ENCODE measurements at regions of chr3 and their contacts with region 1.

Region 1: DNA sequence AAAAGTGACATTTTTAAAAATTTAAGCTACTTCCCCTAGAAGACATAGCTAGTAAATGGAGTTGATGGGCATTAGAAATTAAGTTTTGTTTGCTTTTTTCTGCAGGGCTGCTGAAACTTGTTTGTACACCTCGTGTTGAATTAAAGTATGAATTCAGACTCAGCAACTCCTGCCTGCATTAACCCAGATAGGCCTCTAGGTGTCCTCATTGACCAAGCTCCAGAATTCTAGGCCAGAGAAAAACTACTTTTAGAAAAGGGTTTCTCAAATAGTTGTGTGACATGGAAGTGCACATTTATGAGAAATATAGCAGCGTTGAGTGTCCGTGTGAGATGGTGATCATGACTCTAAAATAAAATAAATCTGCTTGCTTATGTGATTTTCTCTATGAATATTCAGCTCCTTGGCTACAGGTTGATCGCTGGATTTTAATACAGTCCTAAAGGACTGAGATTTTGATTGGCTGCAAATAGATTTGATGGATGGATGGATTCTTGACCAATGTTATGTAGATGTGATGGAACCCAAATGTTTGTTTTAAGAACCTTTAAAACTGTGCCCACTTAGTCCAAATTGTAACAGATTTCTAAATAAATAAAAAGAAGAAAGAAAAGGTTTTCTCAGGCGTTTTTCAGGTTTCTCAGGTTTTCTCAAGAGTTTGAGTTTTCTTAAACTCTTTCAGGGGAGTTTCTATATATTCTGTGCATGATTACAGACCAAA is 39.4 kb upstream of the LMOD3 start:
- DNase-seq: peak; percentile 65
- H3K4me3 Mint-ChIP-seq: no peak overlapping the region
- H3K27ac Mint-ChIP-seq: no peak overlapping the region
- H3K4me1 Mint-ChIP-seq: no peaks in the 10 kb centered on the region
- H3K27me3 Mint-ChIP-seq: no peaks in the 10 kb centered on the region
- CTCF ChIP-seq: peak; percentile 88

Region 2: GRCh38 chr3:69143605-69144004 is 18.1 kb before region 1 on chr3:
- CTCF ChIA-PET with region 1: interaction called, 17 read pairs
- POLR2A ChIA-PET with region 1: no interaction called
- intact Hi-C with region 1: no loop called
- DNase-seq: peak; percentile 65
- H3K4me3 Mint-ChIP-seq: no peak overlapping the region
- H3K27ac Mint-ChIP-seq: no peak overlapping the region
- H3K4me1 Mint-ChIP-seq: peaks cover 18% of the 10 kb centered on the region
- H3K27me3 Mint-ChIP-seq: no peaks in the 10 kb centered on the region
- CTCF ChIP-seq: no peak

Region 3: DNA sequence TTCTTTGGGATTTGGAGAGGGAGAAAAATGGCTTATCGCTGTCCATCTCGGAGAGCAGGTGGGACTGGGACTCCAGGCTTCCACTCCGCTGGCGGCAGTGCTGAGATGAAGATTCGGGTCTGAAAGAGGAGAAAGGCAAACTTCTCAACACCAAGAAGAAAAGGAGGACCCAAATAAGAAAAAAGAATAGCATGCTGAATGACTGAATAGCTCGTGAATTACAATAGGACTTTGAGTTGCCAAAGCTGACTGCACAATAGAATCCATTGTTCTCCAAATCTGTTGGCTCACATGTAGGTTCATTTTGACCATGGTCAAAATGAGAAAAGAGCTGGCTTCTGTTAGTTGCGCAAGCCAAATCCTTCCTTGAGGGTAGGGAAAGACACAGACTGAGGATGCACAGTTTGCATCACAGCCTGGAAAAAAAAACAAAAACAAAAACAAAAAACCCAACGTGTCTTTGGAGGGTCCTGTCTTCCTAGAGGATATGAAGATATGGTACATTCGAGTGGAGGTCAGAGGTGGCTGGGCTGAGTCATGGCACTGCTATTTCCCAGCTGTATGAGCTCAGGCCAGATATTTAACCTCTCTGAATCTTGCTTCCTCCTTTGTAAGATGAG is 20.0 kb after region 1 on chr3:
- CTCF ChIA-PET with region 1: interaction called, 11 read pairs
- POLR2A ChIA-PET with region 1: interaction called, 3 read pairs
- intact Hi-C with region 1: no loop called
- DNase-seq: peak; percentile 38
- H3K4me3 Mint-ChIP-seq: no peak overlapping the region
- H3K27ac Mint-ChIP-seq: peak overlapping the region; percentile 46
- H3K4me1 Mint-ChIP-seq: peaks cover 24% of the 10 kb centered on the region
- H3K27me3 Mint-ChIP-seq: no peaks in the 10 kb centered on the region
- CTCF ChIP-seq: no peak

Region 4: DNA sequence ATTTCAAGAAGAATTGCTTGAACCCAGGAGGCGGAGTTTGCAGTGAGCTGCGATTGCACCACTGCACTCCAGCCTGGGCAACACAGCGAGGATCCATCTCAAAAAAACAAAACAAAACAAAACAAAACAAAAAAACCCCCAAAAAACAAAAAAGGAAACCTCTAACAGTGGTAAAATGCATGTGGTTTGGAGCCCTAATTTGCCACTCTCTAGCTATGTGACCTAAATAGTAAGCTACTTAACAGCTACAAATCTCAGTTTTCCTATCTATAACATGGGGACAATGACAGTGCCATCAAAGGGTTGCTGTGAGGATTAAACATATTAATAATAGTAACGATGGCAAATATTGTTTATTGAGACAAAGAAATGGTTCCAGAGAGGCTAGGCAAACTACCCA is 80.0 kb after region 1 on chr3:
- CTCF ChIA-PET with region 1: interaction called, 11 read pairs
- POLR2A ChIA-PET with region 1: interaction called, 6 read pairs
- intact Hi-C with region 1: no loop called
- DNase-seq: no peak
- H3K4me3 Mint-ChIP-seq: no peak overlapping the region
- H3K27ac Mint-ChIP-seq: no peak overlapping the region
- H3K4me1 Mint-ChIP-seq: peaks cover 12% of the 10 kb centered on the region
- H3K27me3 Mint-ChIP-seq: no peaks in the 10 kb centered on the region
- CTCF ChIP-seq: no peak

Region 5: GRCh38 chr3:69299361-69299760 is 137.6 kb after region 1 on chr3:
- CTCF ChIA-PET with region 1: interaction called, 332 read pairs
- POLR2A ChIA-PET with region 1: interaction called, 3 read pairs
- intact Hi-C with region 1: no loop called
- DNase-seq: no peak
- H3K4me3 Mint-ChIP-seq: no peak overlapping the region
- H3K27ac Mint-ChIP-seq: no peak overlapping the region
- H3K4me1 Mint-ChIP-seq: peaks cover 7% of the 10 kb centered on the region
- H3K27me3 Mint-ChIP-seq: no peaks in the 10 kb centered on the region
- CTCF ChIP-seq: no peak

Region 6: GRCh38 chr3:69425261-69425660 is 263.5 kb after region 1 on chr3:
- CTCF ChIA-PET with region 1: interaction called, 41 read pairs
- POLR2A ChIA-PET with region 1: interaction called, 4 read pairs
- intact Hi-C with region 1: loop called (anchors 1 kb)
- DNase-seq: peak; percentile 62
- H3K4me3 Mint-ChIP-seq: no peak overlapping the region
- H3K27ac Mint-ChIP-seq: no peak overlapping the region
- H3K4me1 Mint-ChIP-seq: peaks cover 18% of the 10 kb centered on the region
- H3K27me3 Mint-ChIP-seq: no peaks in the 10 kb centered on the region
- CTCF ChIP-seq: peak; percentile 74

Region 7: GRCh38 chr3:69579306-69580041 is 417.7 kb after region 1 on chr3:
- CTCF ChIA-PET with region 1: no interaction called
- POLR2A ChIA-PET with region 1: no interaction called
- intact Hi-C with region 1: no loop called
- DNase-seq: no peak
- H3K4me3 Mint-ChIP-seq: no peak overlapping the region
- H3K27ac Mint-ChIP-seq: no peak overlapping the region
- H3K4me1 Mint-ChIP-seq: no peaks in the 10 kb centered on the region
- H3K27me3 Mint-ChIP-seq: peaks cover 23% of the 10 kb centered on the region
- CTCF ChIP-seq: no peak

Measured in MCF 10A (cell line).